CD8-positive, alpha-beta T cell (primary cell): ENCODE measurements at regions of chr15 and their contacts with region 1.

Region 1: DNA sequence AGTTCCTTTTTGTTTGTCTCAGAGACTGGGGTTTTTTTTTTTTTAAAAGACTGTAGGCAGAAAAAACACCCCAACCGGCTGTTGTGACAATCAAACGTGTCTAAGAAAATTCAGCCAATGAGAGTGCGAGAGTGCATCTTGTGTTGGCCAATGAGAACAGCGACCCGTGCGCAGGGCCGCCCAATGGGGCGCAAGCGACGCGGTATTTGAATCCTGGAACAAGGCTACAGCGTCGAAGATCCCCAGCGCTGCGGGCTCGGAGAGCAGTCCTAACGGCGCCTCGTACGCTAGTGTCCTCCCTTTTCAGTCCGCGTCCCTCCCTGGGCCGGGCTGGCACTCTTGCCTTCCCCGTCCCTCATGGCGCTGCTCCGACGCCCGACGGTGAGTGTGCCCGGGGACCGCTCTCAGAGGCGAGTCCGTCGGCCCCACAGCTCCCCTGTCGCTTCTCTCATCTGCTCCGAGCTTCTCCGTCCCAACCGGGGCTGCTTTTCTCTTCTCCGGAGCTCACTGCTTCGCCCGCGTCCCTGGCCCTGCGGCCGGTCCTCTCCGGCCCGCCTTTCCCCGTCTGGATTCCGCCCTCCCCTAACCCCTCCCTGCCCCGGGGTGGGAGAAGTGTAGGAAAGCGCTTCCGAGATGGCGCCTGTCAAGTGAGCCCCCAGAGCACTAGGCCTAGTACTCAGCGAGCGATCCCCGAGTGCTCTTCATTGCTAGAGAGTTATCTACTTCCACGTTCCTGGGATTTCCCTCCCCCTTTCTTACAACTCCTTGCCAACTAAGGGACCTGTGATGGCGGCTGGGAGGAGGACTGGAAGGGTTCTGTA is at the start of gene CCNB2:
- DNase-seq: peak; percentile 70 to 95 (median 80)
- ATAC-seq: peak; percentile 99
- H3K4me3 ChIP-seq: peak within 1 kb of the TSS; percentile 76 to 78
- H3K4me3 Mint-ChIP-seq: peak within 1 kb of the TSS; percentile 95
- H3K27ac ChIP-seq: peak within 1 kb of the TSS; percentile 60 to 71
- H3K27ac Mint-ChIP-seq: peak within 1 kb of the TSS; percentile 99
- H3K4me1 ChIP-seq: peaks cover 7% of the 10 kb centered on the region
- H3K4me1 Mint-ChIP-seq: peaks cover 17% of the 10 kb centered on the region
- H3K27me3 ChIP-seq: no peaks in the 10 kb centered on the region
- H3K27me3 Mint-ChIP-seq: no peaks in the 10 kb centered on the region
- CTCF ChIP-seq: no peak
- total RNA-seq, gene CCNB2: 0.33 to 0.64 TPM

Region 2: GRCh38 chr15:58770857-58771620 is 334.1 kb before region 1 on chr15 and contains the start of gene MINDY2:
- CTCF ChIA-PET with region 1: no interaction called
- POLR2A ChIA-PET with region 1: no interaction called
- intact Hi-C with region 1: loop called in 1 of 2 experiments (anchors 10 kb)
- DNase-seq: peak; percentile 83 to 97 (median 94)
- ATAC-seq: peak; percentile 94
- H3K4me3 ChIP-seq: peak within 1 kb of the TSS; percentile 98
- H3K4me3 Mint-ChIP-seq: peak within 1 kb of the TSS; percentile 92
- H3K27ac ChIP-seq: peak within 1 kb of the TSS; percentile 86 to 89
- H3K27ac Mint-ChIP-seq: peak within 1 kb of the TSS; percentile 94
- H3K4me1 ChIP-seq: peaks cover 34% of the 10 kb centered on the region
- H3K4me1 Mint-ChIP-seq: peaks cover 22% of the 10 kb centered on the region
- H3K27me3 ChIP-seq: no peaks in the 10 kb centered on the region
- H3K27me3 Mint-ChIP-seq: no peaks in the 10 kb centered on the region
- CTCF ChIP-seq: no peak
- total RNA-seq, gene MINDY2: 4.7 to 4.9 TPM

Region 3: GRCh38 chr15:58987489-58988005 is 117.6 kb before region 1 on chr15 and contains the start of gene RNF111:
- CTCF ChIA-PET with region 1: no interaction called
- POLR2A ChIA-PET with region 1: no interaction called
- intact Hi-C with region 1: loop called (anchors 1 to 2 kb)
- DNase-seq: peak; percentile 77 to 97 (median 88)
- ATAC-seq: peak; percentile 95
- H3K4me3 ChIP-seq: peak within 1 kb of the TSS; percentile 87 to 100
- H3K4me3 Mint-ChIP-seq: peak within 1 kb of the TSS; percentile 95
- H3K27ac ChIP-seq: peak within 1 kb of the TSS; percentile 84
- H3K27ac Mint-ChIP-seq: peak within 1 kb of the TSS; percentile 94
- H3K4me1 ChIP-seq: peaks cover 23% of the 10 kb centered on the region
- H3K4me1 Mint-ChIP-seq: peaks cover 43% of the 10 kb centered on the region
- H3K27me3 ChIP-seq: no peaks in the 10 kb centered on the region
- H3K27me3 Mint-ChIP-seq: no peaks in the 10 kb centered on the region
- CTCF ChIP-seq: no peak
- total RNA-seq, gene RNF111: 25.2 to 28.4 TPM

Region 4: GRCh38 chr15:59656897-59657634 is 551.9 kb after region 1 on chr15 and contains the start of gene GTF2A2:
- CTCF ChIA-PET with region 1: no interaction called
- POLR2A ChIA-PET with region 1: no interaction called
- intact Hi-C with region 1: loop called in 1 of 2 experiments (anchors 10 kb)
- DNase-seq: peak; percentile 82 to 96 (median 93)
- ATAC-seq: peak; percentile 99
- H3K4me3 ChIP-seq: peak within 1 kb of the TSS; percentile 82 to 85
- H3K4me3 Mint-ChIP-seq: peak within 1 kb of the TSS; percentile 51
- H3K27ac ChIP-seq: peak within 1 kb of the TSS; percentile 72 to 87
- H3K27ac Mint-ChIP-seq: peak within 1 kb of the TSS; percentile 83
- H3K4me1 ChIP-seq: peaks cover 24% of the 10 kb centered on the region
- H3K4me1 Mint-ChIP-seq: peaks cover 13% of the 10 kb centered on the region
- H3K27me3 ChIP-seq: no peaks in the 10 kb centered on the region
- H3K27me3 Mint-ChIP-seq: no peaks in the 10 kb centered on the region
- CTCF ChIP-seq: no peak
- total RNA-seq, gene GTF2A2: 62.7 to 63.6 TPM

Region 5: GRCh38 chr15:60478566-60479360 is 1373.6 kb after region 1 on chr15 and contains the start of gene ICE2:
- CTCF ChIA-PET with region 1: no interaction called
- POLR2A ChIA-PET with region 1: no interaction called
- intact Hi-C with region 1: loop called in 1 of 2 experiments (anchors 10 kb)
- DNase-seq: peak; percentile 88 to 98 (median 96)
- ATAC-seq: peak; percentile 90
- H3K4me3 ChIP-seq: peak within 1 kb of the TSS; percentile 68 to 89
- H3K4me3 Mint-ChIP-seq: peak within 1 kb of the TSS; percentile 98
- H3K27ac ChIP-seq: peak within 1 kb of the TSS; percentile 85 to 92
- H3K27ac Mint-ChIP-seq: peak within 1 kb of the TSS; percentile 100
- H3K4me1 ChIP-seq: peaks cover 39% of the 10 kb centered on the region
- H3K4me1 Mint-ChIP-seq: peaks cover 72% of the 10 kb centered on the region
- H3K27me3 ChIP-seq: no peaks in the 10 kb centered on the region
- H3K27me3 Mint-ChIP-seq: no peaks in the 10 kb centered on the region
- CTCF ChIP-seq: no peak
- total RNA-seq, gene ICE2: 13.9 to 18.3 TPM